HepG2 (cell line): ENCODE measurements at regions of chr17 and their contacts with region 1.

Region 1: GRCh38 chr17:45729294-45729907 is 54.7 kb upstream of the CRHR1 start:
- DNase-seq: no peak
- ATAC-seq: no peak
- H3K4me3 ChIP-seq: no peak overlapping the region
- H3K27ac ChIP-seq: no peak overlapping the region
- H3K4me1 ChIP-seq: no peaks in the 10 kb centered on the region
- H3K27me3 ChIP-seq: peaks cover 7 to 25% of the 10 kb centered on the region in 2 experiments; a peak in 4 of 5 replicates
- CTCF ChIP-seq: no peak
- EP300 ChIP-seq: no peak
- POLR2A ChIP-seq: no peak
- RAD21 ChIP-seq: no peak

Region 2: DNA sequence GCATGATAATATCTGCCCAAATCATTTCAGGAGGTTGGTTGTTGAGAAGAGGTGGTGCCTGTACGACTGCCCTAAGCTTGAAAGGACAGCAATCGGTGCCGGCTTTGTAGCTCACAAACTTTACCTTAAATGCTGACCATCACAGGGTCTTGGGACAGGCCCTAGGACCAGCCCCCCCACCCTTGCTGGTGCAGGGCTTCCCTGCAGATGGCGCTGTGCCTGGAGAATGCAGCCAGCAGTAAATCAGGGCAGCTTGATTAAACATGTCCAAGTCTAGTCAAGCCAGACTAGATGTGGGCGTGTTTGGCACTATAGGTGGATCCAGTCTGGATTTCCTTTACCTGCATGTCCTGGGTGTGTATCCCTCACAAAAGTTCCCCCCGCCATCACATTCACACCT is 80.8 kb before region 1 on chr17:
- CTCF ChIA-PET with region 1: no interaction called
- POLR2A ChIA-PET with region 1: no interaction called
- in situ Hi-C with region 1: loop called (anchors 5 kb)
- intact Hi-C with region 1: no loop called
- DNase-seq: no peak
- ATAC-seq: no peak
- H3K4me3 ChIP-seq: no peak overlapping the region
- H3K27ac ChIP-seq: no peak overlapping the region
- H3K4me1 ChIP-seq: peaks cover 19% of the 10 kb centered on the region
- H3K27me3 ChIP-seq: peaks cover 11 to 44% of the 10 kb centered on the region in 2 experiments
- CTCF ChIP-seq: 0 out of 2 replicates have a peak, but pooled peaks have one; percentile 12
- EP300 ChIP-seq: no peak
- POLR2A ChIP-seq: no peak
- RAD21 ChIP-seq: no peak